Mammary epithelial cell (primary cell): ENCODE measurements at regions of chr12 and their contacts with region 1.

Region 1: DNA sequence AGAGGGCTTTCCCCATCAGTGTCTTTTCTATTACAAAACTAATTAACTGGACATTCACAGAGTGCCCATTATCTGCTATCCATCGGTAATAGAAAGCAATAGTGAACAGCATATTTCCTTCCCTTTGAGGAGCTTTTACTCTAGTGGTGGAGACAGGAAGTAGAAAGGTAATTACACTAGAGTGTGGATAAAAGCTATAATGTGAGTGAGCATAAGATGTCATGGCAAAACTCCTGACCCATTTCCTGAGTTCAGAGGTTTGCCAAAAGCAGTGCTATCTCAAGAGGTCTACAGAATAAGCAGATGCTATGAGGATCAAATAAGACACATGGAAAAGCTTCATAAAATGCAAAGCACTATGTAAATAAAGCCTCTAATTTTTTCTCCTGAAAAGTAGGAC is 24.0 kb downstream of the TIMELESS start:
- DNase-seq: no peak
- H3K4me3 ChIP-seq: no peak overlapping the region
- H3K27ac ChIP-seq: no peak overlapping the region
- H3K4me1 ChIP-seq: no peaks in the 10 kb centered on the region
- H3K27me3 ChIP-seq: no peaks in the 10 kb centered on the region
- CTCF ChIP-seq: no peak

Region 2: GRCh38 chr12:56230432-56231183 is 194.6 kb before region 1 on chr12:
- CTCF ChIA-PET with region 1: no interaction called
- dilution Hi-C with region 1: no loop called
- in situ Hi-C with region 1: no loop called
- intact Hi-C with region 1: no loop called
- DNase-seq: no peak
- H3K4me3 ChIP-seq: no peak overlapping the region
- H3K27ac ChIP-seq: no peak overlapping the region
- H3K4me1 ChIP-seq: no peaks in the 10 kb centered on the region
- H3K27me3 ChIP-seq: no peaks in the 10 kb centered on the region
- CTCF ChIP-seq: no peak

Region 3: GRCh38 chr12:56366948-56367347 is 58.2 kb before region 1 on chr12:
- CTCF ChIA-PET with region 1: no interaction called
- dilution Hi-C with region 1: loop called (anchors 5 kb)
- in situ Hi-C with region 1: no loop called
- intact Hi-C with region 1: no loop called
- DNase-seq: no peak
- H3K4me3 ChIP-seq: no peak overlapping the region
- H3K27ac ChIP-seq: no peak overlapping the region
- H3K4me1 ChIP-seq: no peaks in the 10 kb centered on the region
- H3K27me3 ChIP-seq: no peaks in the 10 kb centered on the region
- CTCF ChIP-seq: no peak

Region 4: GRCh38 chr12:56878010-56878339 is 452.8 kb after region 1 on chr12:
- CTCF ChIA-PET with region 1: no interaction called
- dilution Hi-C with region 1: no loop called
- in situ Hi-C with region 1: no loop called
- intact Hi-C with region 1: no loop called
- DNase-seq: no peak
- H3K4me3 ChIP-seq: no peak overlapping the region
- H3K27ac ChIP-seq: no peak overlapping the region
- H3K4me1 ChIP-seq: peaks cover 7% of the 10 kb centered on the region
- H3K27me3 ChIP-seq: no peaks in the 10 kb centered on the region
- CTCF ChIP-seq: no peak